GM12878 (cell line): ENCODE measurements at regions of chr16 and their contacts with region 1.

Region 1: GRCh38 chr16:10964039-10964890 is 19.9 kb downstream of the CLEC16A start:
- DNase-seq: no peak
- ATAC-seq: peak; percentile 62
- H3K4me3 ChIP-seq: peak overlapping the region; percentile 18; the same call in 1 of the 2 replicates
- H3K27ac ChIP-seq: peak overlapping the region; percentile 99
- H3K4me1 ChIP-seq: peaks cover 35% of the 10 kb centered on the region
- H3K27me3 ChIP-seq: no peaks in the 10 kb centered on the region
- CTCF ChIP-seq: peak; percentile 94 to 98 (median 98); a peak in 5 of 6 replicates
- EP300 ChIP-seq: peak; percentile 35 to 38; a peak in 2 of 4 replicates
- POLR2A ChIP-seq: peak; percentile 34; the same call in 1 of the 2 replicates
- RAD21 ChIP-seq: peak; percentile 87

Region 2: GRCh38 chr16:10942233-10943063 is 21.8 kb before region 1 on chr16 and contains the start of gene DEXI:
- CTCF ChIA-PET with region 1: interaction called, 107 read pairs
- POLR2A ChIA-PET with region 1: interaction called, 4 read pairs
- RAD21 ChIA-PET with region 1: interaction called, 61 read pairs
- SMC1A ChIA-PET with region 1: interaction called, 15 read pairs
- in situ Hi-C with region 1: no loop called
- intact Hi-C with region 1: no loop called
- DNase-seq: peak; percentile 69
- ATAC-seq: peak; percentile 80
- H3K4me3 ChIP-seq: peak within 1 kb of the TSS; percentile 82
- H3K27ac ChIP-seq: peak within 1 kb of the TSS; percentile 72
- H3K4me1 ChIP-seq: peaks cover 32% of the 10 kb centered on the region
- H3K27me3 ChIP-seq: no peaks in the 10 kb centered on the region
- CTCF ChIP-seq: peak in 1 of 3 experiments; percentile 9; a peak in 1 of 6 replicates
- EP300 ChIP-seq: no peak
- POLR2A ChIP-seq: peak; percentile 79
- RAD21 ChIP-seq: no peak
- polyA plus RNA-seq, gene DEXI: 1.4 to 4.3 TPM

Region 3: GRCh38 chr16:11094072-11094856 is 130.0 kb after region 1 on chr16:
- CTCF ChIA-PET with region 1: interaction called, 13 read pairs
- POLR2A ChIA-PET with region 1: no interaction called
- RAD21 ChIA-PET with region 1: interaction called, 10 read pairs
- SMC1A ChIA-PET with region 1: interaction called, 7 read pairs
- in situ Hi-C with region 1: no loop called
- intact Hi-C with region 1: no loop called
- DNase-seq: peak; percentile 53
- ATAC-seq: peak; percentile 86
- H3K4me3 ChIP-seq: 0 out of 2 replicates have a peak overlapping the region, but pooled peaks have one; percentile 18
- H3K27ac ChIP-seq: peak overlapping the region; percentile 80
- H3K4me1 ChIP-seq: peaks cover 54% of the 10 kb centered on the region
- H3K27me3 ChIP-seq: no peaks in the 10 kb centered on the region
- CTCF ChIP-seq: no peak
- EP300 ChIP-seq: 0 out of 4 replicates have a peak, but pooled peaks of 1 of the 2 experiments have one; percentile 39
- POLR2A ChIP-seq: no peak
- RAD21 ChIP-seq: no peak

Region 4: GRCh38 chr16:11224096-11224893 is 260.0 kb after region 1 on chr16:
- CTCF ChIA-PET with region 1: no interaction called
- POLR2A ChIA-PET with region 1: no interaction called
- RAD21 ChIA-PET with region 1: interaction called, 13 read pairs
- SMC1A ChIA-PET with region 1: interaction called, 4 read pairs
- in situ Hi-C with region 1: no loop called
- intact Hi-C with region 1: no loop called
- DNase-seq: peak; percentile 57
- ATAC-seq: peak; percentile 75
- H3K4me3 ChIP-seq: peak overlapping the region; percentile 19; the same call in 1 of the 2 replicates
- H3K27ac ChIP-seq: peak overlapping the region; percentile 94
- H3K4me1 ChIP-seq: peaks cover 28% of the 10 kb centered on the region
- H3K27me3 ChIP-seq: no peaks in the 10 kb centered on the region
- CTCF ChIP-seq: no peak
- EP300 ChIP-seq: no peak
- POLR2A ChIP-seq: peak; percentile 55
- RAD21 ChIP-seq: no peak

Region 5: DNA sequence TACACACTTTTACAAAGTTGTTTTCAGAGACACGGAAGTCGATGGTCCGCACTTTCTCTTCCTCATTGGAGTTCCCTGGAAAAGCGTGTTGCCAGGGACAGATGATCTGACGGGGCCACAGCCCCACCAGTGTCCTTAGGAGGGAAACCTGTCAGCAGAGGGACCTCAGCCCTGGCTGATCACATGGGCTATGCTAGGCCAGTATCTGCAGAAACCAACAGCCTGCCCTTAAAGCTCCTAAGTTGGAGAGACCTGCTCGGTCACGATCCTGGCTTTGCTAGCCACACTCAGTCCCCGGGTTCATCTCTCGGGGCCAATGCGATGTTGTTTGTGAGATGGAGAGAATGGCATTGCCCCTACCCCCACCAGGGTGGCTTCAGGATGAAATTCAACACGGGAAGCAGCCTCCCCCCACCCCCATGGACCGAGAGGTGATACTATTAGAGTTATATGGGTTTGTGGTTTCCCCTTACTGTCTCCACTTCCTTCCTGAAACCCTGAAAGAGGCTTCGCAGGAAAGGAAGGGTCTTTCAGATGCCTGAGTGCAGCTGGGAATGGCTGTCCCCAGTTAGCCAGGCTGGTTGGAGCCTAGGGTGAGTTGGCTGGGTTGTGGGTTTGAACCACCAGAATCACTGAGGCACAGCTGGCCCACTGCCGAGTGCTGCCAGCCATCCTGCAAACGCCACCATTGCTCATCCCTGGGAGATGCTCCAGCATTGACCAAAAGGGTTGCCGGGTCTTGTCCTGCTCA is 397.6 kb after region 1 on chr16:
- CTCF ChIA-PET with region 1: interaction called, 40 read pairs
- POLR2A ChIA-PET with region 1: interaction called, 4 read pairs
- RAD21 ChIA-PET with region 1: interaction called, 37 read pairs
- SMC1A ChIA-PET with region 1: interaction called, 20 read pairs
- in situ Hi-C with region 1: loop called (anchors 5 kb)
- intact Hi-C with region 1: no loop called
- DNase-seq: peak; percentile 45
- ATAC-seq: peak; percentile 65
- H3K4me3 ChIP-seq: peak overlapping the region; percentile 38; the same call in 1 of the 2 replicates
- H3K27ac ChIP-seq: peak overlapping the region; percentile 5; the same call in 1 of the 2 replicates
- H3K4me1 ChIP-seq: peaks cover 28% of the 10 kb centered on the region
- H3K27me3 ChIP-seq: no peaks in the 10 kb centered on the region
- CTCF ChIP-seq: no peak
- EP300 ChIP-seq: peak in 1 of 2 experiments; percentile 70; a peak in 2 of 4 replicates
- POLR2A ChIP-seq: no peak
- RAD21 ChIP-seq: 0 out of 2 replicates have a peak, but pooled peaks have one; percentile 24

Region 6: GRCh38 chr16:11667824-11668622 is 703.8 kb after region 1 on chr16 and contains the start of gene SNN:
- CTCF ChIA-PET with region 1: no interaction called
- POLR2A ChIA-PET with region 1: no interaction called
- RAD21 ChIA-PET with region 1: no interaction called
- SMC1A ChIA-PET with region 1: no interaction called
- in situ Hi-C with region 1: loop called (anchors 25 kb)
- intact Hi-C with region 1: no loop called
- DNase-seq: no peak
- ATAC-seq: peak; percentile 70
- H3K4me3 ChIP-seq: peak within 1 kb of the TSS; percentile 67
- H3K27ac ChIP-seq: peak within 1 kb of the TSS; percentile 88
- H3K4me1 ChIP-seq: peaks cover 45% of the 10 kb centered on the region
- H3K27me3 ChIP-seq: no peaks in the 10 kb centered on the region
- CTCF ChIP-seq: no peak
- EP300 ChIP-seq: no peak
- POLR2A ChIP-seq: peak; percentile 59; the same call in 1 of the 2 replicates
- RAD21 ChIP-seq: no peak
- polyA plus RNA-seq, gene SNN: 2.2 to 5.2 TPM